Activated CD4-positive, alpha-beta memory T cell treated with anti-CD3 and anti-CD28 coated beads for 36 hours (primary cell): ENCODE measurements at regions of chr1 and their contacts with region 1.

Region 1: GRCh38 chr1:182789138-182790076 is at the start of gene NPL:
- DNase-seq: peak; percentile 90
- H3K4me3 Mint-ChIP-seq: peak within 1 kb of the TSS; percentile 80
- H3K27ac Mint-ChIP-seq: no peak within 1 kb of the TSS
- H3K4me1 Mint-ChIP-seq: peaks cover 13% of the 10 kb centered on the region
- H3K27me3 Mint-ChIP-seq: no peaks in the 10 kb centered on the region
- total RNA-seq, gene NPL: 3.8 to 7.8 TPM

Region 2: DNA sequence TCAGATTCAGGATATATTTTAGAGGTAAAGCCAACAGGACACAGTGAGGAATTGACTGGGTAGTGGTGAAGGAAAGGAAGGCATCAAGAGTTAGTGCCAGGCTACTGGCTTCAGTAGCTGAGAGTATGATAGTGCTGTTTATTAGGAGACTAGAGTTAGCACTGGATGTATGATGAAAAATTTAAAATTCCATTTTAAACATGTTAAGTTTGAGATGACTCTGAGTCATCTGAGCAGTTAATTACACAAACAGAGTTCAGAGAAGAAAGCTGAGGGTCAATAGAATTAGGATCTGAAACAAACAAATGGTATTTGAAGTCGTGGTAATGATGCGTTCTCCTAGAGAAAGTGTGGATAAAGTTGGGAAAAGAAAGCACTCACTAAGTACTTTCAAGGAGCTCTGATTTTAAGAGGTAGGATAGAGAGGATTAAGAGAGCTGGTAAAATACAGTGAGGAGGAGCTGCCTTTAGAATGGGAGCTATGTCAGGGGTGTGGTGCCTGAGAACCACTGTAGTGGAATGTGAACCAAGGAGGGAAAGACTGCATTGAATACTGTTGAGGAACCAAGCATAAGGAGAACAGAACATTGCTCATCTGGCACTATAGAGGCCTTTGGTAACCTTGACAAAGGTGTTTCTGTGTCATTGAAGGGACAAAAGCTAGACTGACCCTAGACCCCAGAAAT is 185.2 kb after region 1 on chr1:
- CTCF ChIA-PET with region 1: no interaction called
- POLR2A ChIA-PET with region 1: no interaction called
- intact Hi-C with region 1: no loop called
- DNase-seq: no peak
- H3K4me3 Mint-ChIP-seq: no peak overlapping the region
- H3K27ac Mint-ChIP-seq: no peak overlapping the region
- H3K4me1 Mint-ChIP-seq: no peaks in the 10 kb centered on the region
- H3K27me3 Mint-ChIP-seq: peaks cover 9% of the 10 kb centered on the region

Region 3: GRCh38 chr1:183023601-183024316 is 234.4 kb after region 1 on chr1:
- CTCF ChIA-PET with region 1: no interaction called
- POLR2A ChIA-PET with region 1: no interaction called
- intact Hi-C with region 1: loop called (anchors 2 kb)
- DNase-seq: peak; percentile 52
- H3K4me3 Mint-ChIP-seq: peak overlapping the region; percentile 56
- H3K27ac Mint-ChIP-seq: no peak overlapping the region
- H3K4me1 Mint-ChIP-seq: peaks cover 16% of the 10 kb centered on the region
- H3K27me3 Mint-ChIP-seq: peaks cover 60% of the 10 kb centered on the region